ENCODE measurements at regions of chr12 and their contacts with region 1.

Region 1: GRCh38 chr12:575948-576612 is 87.2 kb downstream of the NINJ2 start:
- H3K4me3 Mint-ChIP-seq: peak overlapping the region; percentile 66
- H3K27ac Mint-ChIP-seq: peak overlapping the region; percentile 85
- H3K4me1 Mint-ChIP-seq: peaks cover 33% of the 10 kb centered on the region
- H3K27me3 Mint-ChIP-seq: peaks cover 2% of the 10 kb centered on the region

Region 2: DNA sequence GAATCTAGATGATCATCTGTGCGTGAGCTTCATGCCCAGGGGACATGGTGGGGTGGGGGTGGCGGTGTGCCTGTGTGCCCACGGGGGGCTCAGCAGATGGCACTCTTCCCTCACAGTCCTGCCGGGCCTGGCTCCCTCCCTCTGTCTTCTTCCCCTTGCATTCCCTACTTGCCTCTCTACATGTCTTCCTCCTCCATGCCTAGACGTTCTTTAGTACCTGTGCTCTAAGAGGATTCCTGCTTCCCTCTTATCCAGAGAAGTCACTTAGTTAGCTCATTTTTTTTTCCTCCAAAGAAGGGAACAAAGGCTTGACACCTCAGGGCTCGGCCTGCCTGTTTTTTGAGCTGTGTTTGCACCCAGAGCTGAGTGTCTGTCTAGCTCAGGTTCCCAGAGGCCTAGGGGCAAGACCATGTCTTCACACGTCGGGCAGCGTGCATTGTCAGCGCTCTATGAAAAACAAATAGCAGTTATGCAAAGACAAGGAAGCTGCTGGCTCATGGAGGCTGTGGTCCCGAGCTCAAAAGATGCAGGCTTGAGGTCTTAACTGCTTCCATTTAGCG is 38.4 kb after region 1 on chr12:
- intact Hi-C with region 1: loop called (anchors 5 kb)
- H3K4me3 Mint-ChIP-seq: no peak overlapping the region
- H3K27ac Mint-ChIP-seq: peak overlapping the region; percentile 45
- H3K4me1 Mint-ChIP-seq: peaks cover 95% of the 10 kb centered on the region
- H3K27me3 Mint-ChIP-seq: no peaks in the 10 kb centered on the region

Region 3: GRCh38 chr12:879641-880040 is 303.6 kb after region 1 on chr12:
- intact Hi-C with region 1: no loop called
- H3K4me3 Mint-ChIP-seq: no peak overlapping the region
- H3K27ac Mint-ChIP-seq: no peak overlapping the region
- H3K4me1 Mint-ChIP-seq: no peaks in the 10 kb centered on the region
- H3K27me3 Mint-ChIP-seq: no peaks in the 10 kb centered on the region